ENCODE measurements at regions of chr15 and their contacts with region 1.

Region 1: GRCh38 chr15:78750566-78750965 is 60.7 kb downstream of the ADAMTS7 start:
- DNase-seq: peak; percentile 65
- H3K4me3 ChIP-seq: peak overlapping the region in 3 of 4 donors; percentile 21 to 30 (median 21)
- H3K27ac ChIP-seq: peak overlapping the region; percentile 36 to 78 (median 72)
- H3K4me1 ChIP-seq: peaks cover 0 to 26% (median 14%) of the 10 kb centered on the region in 4 donors
- H3K27me3 ChIP-seq: no peaks in the 10 kb centered on the region
- CTCF ChIP-seq: no peak
- EP300 ChIP-seq: no peak
- POLR2A ChIP-seq: no peak

Region 2: DNA sequence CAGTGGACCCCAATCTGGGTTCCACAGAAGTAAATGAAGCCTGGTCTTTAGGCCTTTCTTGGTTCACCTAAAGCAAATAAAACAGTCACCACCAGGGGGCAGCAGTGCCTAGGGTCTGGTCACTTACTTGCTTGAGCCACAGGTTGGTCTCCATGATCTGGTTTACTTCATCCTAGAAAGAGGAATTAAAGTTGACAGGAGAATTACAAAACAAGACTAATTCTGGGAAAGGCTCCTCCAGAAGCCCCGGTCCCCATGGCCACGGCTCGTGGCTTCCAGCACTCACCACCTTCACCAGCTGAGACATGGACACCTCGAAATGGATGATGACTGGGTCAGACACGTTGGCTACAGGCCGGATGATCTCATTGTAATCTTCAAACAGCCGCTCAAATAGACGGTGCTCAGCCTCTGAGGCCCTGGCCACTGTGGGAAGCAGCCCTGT is 132.1 kb before region 1 on chr15:
- intact Hi-C with region 1: loop called (anchors 1 kb)
- DNase-seq: peak; percentile 96
- H3K4me3 ChIP-seq: no peak overlapping the region
- H3K27ac ChIP-seq: peak overlapping the region in 3 of 4 donors; percentile 37 to 81 (median 65)
- H3K4me1 ChIP-seq: peaks cover 0 to 33% (median 27%) of the 10 kb centered on the region in 4 donors
- H3K27me3 ChIP-seq: peaks cover 0 to 32% (median 12%) of the 10 kb centered on the region in 3 donors
- CTCF ChIP-seq: peak; percentile 77 to 88 (median 82)
- EP300 ChIP-seq: peak in 2 of 4 donors; percentile 63 to 74
- POLR2A ChIP-seq: no peak

Region 3: DNA sequence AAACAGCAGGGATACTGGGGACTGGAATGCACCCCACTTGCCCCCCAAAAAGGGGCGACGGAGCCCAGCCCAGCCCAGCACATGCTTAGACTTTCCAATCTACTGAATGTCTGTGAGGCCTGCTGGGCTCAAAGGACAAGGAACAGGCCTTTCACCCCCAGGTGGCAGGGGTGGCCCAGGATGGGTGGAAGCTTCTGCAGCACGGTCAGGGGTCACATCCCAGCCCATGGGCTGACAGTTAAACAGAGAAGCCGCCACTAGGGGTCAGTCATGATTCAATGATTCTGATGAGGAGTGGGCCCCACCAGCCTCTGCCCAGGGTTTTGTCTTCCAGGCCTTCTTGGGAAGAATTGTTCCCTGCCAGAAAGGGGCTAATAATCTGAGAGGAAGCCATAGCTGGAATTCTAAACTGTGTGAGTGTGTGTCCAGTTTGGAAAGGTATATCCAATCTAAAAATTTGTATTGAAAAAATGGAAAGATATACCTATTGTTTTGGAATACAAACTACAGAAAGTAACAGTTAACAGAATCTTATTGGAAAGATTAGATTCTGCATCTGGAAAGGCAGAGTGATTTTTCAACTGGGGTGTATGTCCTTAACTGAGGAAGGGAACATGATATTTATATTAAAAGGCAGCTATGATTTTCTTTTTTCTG is 111.8 kb before region 1 on chr15:
- intact Hi-C with region 1: loop called (anchors 5 kb)
- DNase-seq: no peak
- H3K4me3 ChIP-seq: no peak overlapping the region
- H3K27ac ChIP-seq: no peak overlapping the region
- H3K4me1 ChIP-seq: peaks cover 0 to 22% (median 13%) of the 10 kb centered on the region in 4 donors
- H3K27me3 ChIP-seq: peaks cover 0 to 4% (median 0%) of the 10 kb centered on the region in 3 donors
- CTCF ChIP-seq: peak; percentile 38 to 56 (median 54)
- EP300 ChIP-seq: no peak
- POLR2A ChIP-seq: no peak

Region 4: DNA sequence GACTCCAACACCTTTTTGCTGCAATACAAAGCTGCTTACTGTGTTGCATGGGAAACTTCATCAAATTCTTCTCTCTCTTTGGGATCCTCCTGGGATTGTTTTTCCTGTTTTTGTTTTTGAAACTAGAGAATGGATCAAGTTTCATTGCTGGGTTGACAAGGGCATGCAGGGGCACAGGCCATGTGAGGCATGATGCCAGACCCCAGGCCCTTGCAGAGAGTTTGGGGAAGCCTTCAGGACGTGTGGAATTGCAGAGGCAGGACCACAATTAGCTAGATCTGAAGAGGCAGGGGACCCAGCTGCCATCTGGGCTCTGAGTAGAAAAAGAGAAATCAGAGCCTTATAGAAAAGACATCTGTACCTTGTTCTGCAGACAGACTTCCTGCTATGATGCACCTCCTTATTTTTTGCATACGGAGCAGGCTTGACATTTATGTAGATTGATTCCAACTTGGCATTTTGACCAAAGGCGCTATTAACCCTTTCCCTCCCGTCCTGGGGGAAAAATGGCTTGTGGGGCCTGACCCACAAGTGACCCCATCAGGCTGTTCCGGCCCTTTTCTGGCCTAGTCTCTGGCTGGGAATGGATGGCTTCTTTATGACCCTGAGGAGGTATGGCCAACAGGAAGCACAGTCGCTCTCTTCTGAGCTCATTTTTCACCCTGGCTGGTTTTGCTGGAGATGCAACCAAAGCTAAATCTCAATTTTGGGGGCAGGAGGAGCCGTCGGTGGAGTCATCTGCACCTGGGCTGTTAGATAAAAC is 65.2 kb before region 1 on chr15:
- intact Hi-C with region 1: no loop called
- DNase-seq: no peak
- H3K4me3 ChIP-seq: no peak overlapping the region
- H3K27ac ChIP-seq: no peak overlapping the region
- H3K4me1 ChIP-seq: peaks cover 0 to 9% (median 2%) of the 10 kb centered on the region in 4 donors
- H3K27me3 ChIP-seq: no peaks in the 10 kb centered on the region
- CTCF ChIP-seq: no peak
- EP300 ChIP-seq: no peak
- POLR2A ChIP-seq: no peak

Region 5: GRCh38 chr15:78714890-78715289 is 35.7 kb before region 1 on chr15:
- intact Hi-C with region 1: loop called (anchors 5 kb)
- DNase-seq: no peak
- H3K4me3 ChIP-seq: no peak overlapping the region
- H3K27ac ChIP-seq: no peak overlapping the region
- H3K4me1 ChIP-seq: peaks cover 0 to 8% (median 3%) of the 10 kb centered on the region in 4 donors
- H3K27me3 ChIP-seq: no peaks in the 10 kb centered on the region
- CTCF ChIP-seq: no peak
- EP300 ChIP-seq: no peak
- POLR2A ChIP-seq: no peak

Region 6: DNA sequence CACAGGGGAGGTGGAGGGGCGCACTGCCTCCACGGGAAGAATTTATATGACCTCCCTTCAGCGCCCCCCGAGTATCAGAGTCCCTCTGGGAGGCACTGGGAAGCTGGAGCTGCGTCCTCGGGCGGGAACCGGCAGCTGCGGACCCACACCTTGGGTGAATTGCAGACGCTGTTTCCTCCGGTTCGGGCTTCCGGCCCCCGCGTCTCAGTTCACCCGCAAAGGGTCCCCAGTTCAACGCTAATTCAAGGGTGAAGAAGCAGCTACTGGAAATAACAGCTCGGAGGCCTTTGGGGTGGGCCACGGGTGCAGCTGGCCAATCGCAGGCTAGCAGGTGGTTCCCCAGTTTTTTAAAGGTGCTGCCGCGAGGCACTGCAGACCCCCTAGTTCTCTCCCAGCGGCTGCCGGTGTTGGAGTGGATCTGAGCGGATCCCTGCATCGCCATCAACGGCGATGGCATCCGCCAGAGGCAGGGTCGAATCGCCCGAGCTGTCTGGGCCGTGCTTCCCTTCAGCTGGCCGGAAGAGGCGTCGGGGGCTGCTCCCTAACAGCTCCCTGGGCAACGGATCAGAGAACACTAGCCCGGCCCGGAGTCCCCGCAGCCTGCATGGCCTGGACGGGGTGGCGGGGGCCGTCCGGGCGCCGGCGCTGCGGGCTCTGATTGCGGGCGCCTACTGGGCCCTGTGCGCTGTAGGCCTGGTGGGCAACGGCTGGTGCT is 80.1 kb after region 1 on chr15:
- intact Hi-C with region 1: no loop called
- DNase-seq: no peak
- H3K4me3 ChIP-seq: peak overlapping the region in 1 of 4 donors; percentile 10
- H3K27ac ChIP-seq: no peak overlapping the region
- H3K4me1 ChIP-seq: peaks cover 0 to 12% (median 5%) of the 10 kb centered on the region in 4 donors
- H3K27me3 ChIP-seq: peaks cover 0 to 3% (median 0%) of the 10 kb centered on the region in 3 donors
- CTCF ChIP-seq: no peak
- EP300 ChIP-seq: no peak
- POLR2A ChIP-seq: no peak